Activated B cell treated with CpG ODN at 0.5 μM for 24 hours (primary cell): ENCODE measurements at regions of chr2 and their contacts with region 1.

Region 1: GRCh38 chr2:231227309-231228162 is 29.1 kb downstream of the ARMC9 start:
- DNase-seq: no peak
- ATAC-seq: peak; percentile 89
- H3K4me3 Mint-ChIP-seq: no peak overlapping the region
- H3K27ac Mint-ChIP-seq: no peak overlapping the region
- H3K4me1 Mint-ChIP-seq: peaks cover 24% of the 10 kb centered on the region
- H3K27me3 Mint-ChIP-seq: no peaks in the 10 kb centered on the region
- CTCF ChIP-seq: peak; percentile 23

Region 2: GRCh38 chr2:230018153-230018552 is 1209.4 kb before region 1 on chr2:
- CTCF ChIA-PET with region 1: no interaction called
- POLR2A ChIA-PET with region 1: no interaction called
- intact Hi-C with region 1: no loop called
- DNase-seq: no peak
- ATAC-seq: no peak
- H3K4me3 Mint-ChIP-seq: no peak overlapping the region
- H3K27ac Mint-ChIP-seq: no peak overlapping the region
- H3K4me1 Mint-ChIP-seq: no peaks in the 10 kb centered on the region
- H3K27me3 Mint-ChIP-seq: no peaks in the 10 kb centered on the region
- CTCF ChIP-seq: no peak

Region 3: GRCh38 chr2:231104115-231104713 is 123.3 kb before region 1 on chr2:
- CTCF ChIA-PET with region 1: interaction called, 13 read pairs
- POLR2A ChIA-PET with region 1: no interaction called
- intact Hi-C with region 1: loop called (anchors 1 kb)
- DNase-seq: peak; percentile 34
- ATAC-seq: peak; percentile 91
- H3K4me3 Mint-ChIP-seq: no peak overlapping the region
- H3K27ac Mint-ChIP-seq: no peak overlapping the region
- H3K4me1 Mint-ChIP-seq: peaks cover 3% of the 10 kb centered on the region
- H3K27me3 Mint-ChIP-seq: no peaks in the 10 kb centered on the region
- CTCF ChIP-seq: no peak

Region 4: DNA sequence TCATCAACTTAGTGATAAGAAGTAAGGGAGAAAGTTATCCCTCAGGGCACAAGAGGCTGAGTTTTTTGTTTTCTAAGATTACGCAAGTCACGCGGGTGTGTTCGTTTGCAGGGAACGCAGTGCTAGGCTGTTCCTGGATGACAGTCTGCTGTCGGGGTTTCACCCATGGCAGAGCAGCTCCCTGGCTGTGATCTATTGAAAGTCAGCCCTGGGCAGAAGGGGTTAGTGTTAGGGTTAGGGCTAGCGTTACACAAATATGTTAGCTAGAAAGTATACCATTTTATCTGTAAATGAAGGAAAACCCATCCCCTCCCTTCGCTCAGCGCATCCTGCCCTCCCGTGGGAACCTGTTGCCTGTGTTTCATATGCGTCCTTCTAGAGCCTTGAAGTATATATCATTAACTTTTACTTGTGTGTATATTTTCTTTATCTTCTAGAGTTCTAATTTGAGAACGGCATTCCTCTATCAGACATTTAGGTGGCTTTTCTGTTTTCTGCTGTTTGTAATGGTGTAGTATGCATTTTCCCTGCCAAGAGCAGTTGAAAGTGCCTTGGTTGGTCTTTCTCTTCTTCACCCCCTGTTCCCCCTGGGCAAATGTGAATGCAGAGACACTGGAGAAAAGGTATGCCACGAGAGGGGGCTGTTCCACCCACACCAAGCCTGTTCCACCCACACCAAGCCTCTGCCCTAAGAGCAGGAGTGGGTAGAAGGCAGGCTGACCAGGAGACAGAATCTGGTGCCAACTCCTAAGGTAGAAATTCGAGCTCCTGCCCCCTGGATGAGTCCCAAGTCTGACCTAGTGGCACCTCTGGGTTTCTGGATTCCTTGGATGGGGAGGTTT is 17.9 kb after region 1 on chr2:
- CTCF ChIA-PET with region 1: interaction called, 10 read pairs
- POLR2A ChIA-PET with region 1: no interaction called
- intact Hi-C with region 1: no loop called
- DNase-seq: no peak
- ATAC-seq: peak; percentile 62
- H3K4me3 Mint-ChIP-seq: no peak overlapping the region
- H3K27ac Mint-ChIP-seq: no peak overlapping the region
- H3K4me1 Mint-ChIP-seq: no peaks in the 10 kb centered on the region
- H3K27me3 Mint-ChIP-seq: no peaks in the 10 kb centered on the region
- CTCF ChIP-seq: no peak

Region 5: GRCh38 chr2:231411831-231412617 is 184.5 kb after region 1 on chr2:
- CTCF ChIA-PET with region 1: interaction called, 50 read pairs
- POLR2A ChIA-PET with region 1: no interaction called
- intact Hi-C with region 1: loop called (anchors 1 kb)
- DNase-seq: peak; percentile 86
- ATAC-seq: peak; percentile 100
- H3K4me3 Mint-ChIP-seq: peak overlapping the region; percentile 56
- H3K27ac Mint-ChIP-seq: no peak overlapping the region
- H3K4me1 Mint-ChIP-seq: peaks cover 9% of the 10 kb centered on the region
- H3K27me3 Mint-ChIP-seq: peaks cover 13% of the 10 kb centered on the region
- CTCF ChIP-seq: no peak

Region 6: GRCh38 chr2:231452799-231453508 is 225.4 kb after region 1 on chr2:
- CTCF ChIA-PET with region 1: interaction called, 34 read pairs
- POLR2A ChIA-PET with region 1: interaction called, 17 read pairs
- intact Hi-C with region 1: loop called (anchors 1 kb)
- DNase-seq: no peak
- ATAC-seq: no peak
- H3K4me3 Mint-ChIP-seq: no peak overlapping the region
- H3K27ac Mint-ChIP-seq: no peak overlapping the region
- H3K4me1 Mint-ChIP-seq: peaks cover 7% of the 10 kb centered on the region
- H3K27me3 Mint-ChIP-seq: no peaks in the 10 kb centered on the region
- CTCF ChIP-seq: no peak